Ovary (tissue), 10 donors: ENCODE measurements at regions of chr1 and their contacts with region 1.

Region 1: GRCh38 chr1:52139817-52140540 is 1.9 kb upstream of the ZFYVE9 start:
- DNase-seq: no peak
- H3K4me3 ChIP-seq: no peak overlapping the region
- H3K27ac ChIP-seq: no peak overlapping the region
- H3K4me1 ChIP-seq: peaks cover 2% of the 10 kb centered on the region
- H3K27me3 ChIP-seq: no peaks in the 10 kb centered on the region
- CTCF ChIP-seq: no peak
- EP300 ChIP-seq: no peak
- POLR2A ChIP-seq: no peak

Region 2: GRCh38 chr1:52072291-52072690 is 67.7 kb before region 1 on chr1:
- intact Hi-C with region 1: no loop called
- DNase-seq: no peak
- H3K4me3 ChIP-seq: no peak overlapping the region
- H3K27ac ChIP-seq: no peak overlapping the region
- H3K4me1 ChIP-seq: no peaks in the 10 kb centered on the region
- H3K27me3 ChIP-seq: no peaks in the 10 kb centered on the region
- CTCF ChIP-seq: no peak
- EP300 ChIP-seq: no peak
- POLR2A ChIP-seq: no peak

Region 3: GRCh38 chr1:52127181-52128180 is 12.5 kb before region 1 on chr1:
- intact Hi-C with region 1: no loop called
- DNase-seq: peak in 3 of 5 donors; percentile 11 to 40 (median 31)
- H3K4me3 ChIP-seq: no peak overlapping the region
- H3K27ac ChIP-seq: no peak overlapping the region
- H3K4me1 ChIP-seq: no peaks in the 10 kb centered on the region
- H3K27me3 ChIP-seq: no peaks in the 10 kb centered on the region
- CTCF ChIP-seq: peak; percentile 23 to 53 (median 47)
- EP300 ChIP-seq: no peak
- POLR2A ChIP-seq: no peak

Region 4: GRCh38 chr1:52306227-52307006 is 166.4 kb after region 1 on chr1:
- intact Hi-C with region 1: loop called in 1 of 4 experiments (anchors 10 kb)
- DNase-seq: no peak
- H3K4me3 ChIP-seq: no peak overlapping the region
- H3K27ac ChIP-seq: no peak overlapping the region
- H3K4me1 ChIP-seq: no peaks in the 10 kb centered on the region
- H3K27me3 ChIP-seq: no peaks in the 10 kb centered on the region
- CTCF ChIP-seq: no peak
- EP300 ChIP-seq: no peak
- POLR2A ChIP-seq: no peak